ENCODE measurements at regions of chr20 and their contacts with region 1.

Region 1: DNA sequence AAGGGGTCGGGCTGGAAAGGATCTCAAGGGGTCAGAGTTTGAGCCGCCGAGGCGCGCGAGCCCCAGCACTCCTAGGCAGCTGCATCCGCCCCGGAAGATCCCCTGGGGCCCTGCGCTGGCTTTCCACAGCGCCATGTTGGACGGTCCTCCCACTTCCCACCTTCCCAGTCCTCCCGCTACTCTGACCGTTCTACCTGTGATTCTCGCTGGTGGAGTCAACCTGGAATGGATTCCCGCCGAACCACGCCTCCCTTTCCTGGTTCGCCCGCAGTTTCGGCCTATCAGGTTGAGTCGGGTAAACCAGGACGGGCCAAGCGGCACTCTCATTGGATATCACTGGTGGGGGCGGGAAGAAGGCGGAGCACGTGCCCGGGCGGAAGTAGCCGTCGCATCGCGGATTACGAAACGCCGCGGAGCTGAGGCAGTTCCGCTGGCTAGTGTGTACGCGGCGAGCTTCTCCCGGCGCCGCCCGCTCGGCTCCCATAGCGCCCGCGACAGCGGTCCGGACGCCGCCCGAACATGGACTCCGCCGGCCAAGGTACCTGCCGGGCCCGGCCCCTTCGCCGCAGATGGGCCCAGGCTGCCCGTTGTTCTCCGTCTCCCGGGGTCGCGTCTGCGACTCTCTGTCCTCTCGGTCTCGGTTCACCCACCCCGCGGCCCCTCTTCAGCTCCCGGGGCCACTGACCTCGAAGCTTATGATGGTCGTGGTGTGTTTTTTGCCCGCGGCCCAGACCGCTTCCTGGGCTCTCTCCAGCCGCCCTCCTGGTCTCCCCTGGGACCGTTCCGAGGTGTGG is at the start of gene TPD52L2:
- DNase-seq: peak; percentile 99
- ATAC-seq: peak; percentile 86
- H3K4me3 Mint-ChIP-seq: peak within 1 kb of the TSS; percentile 79
- H3K27ac Mint-ChIP-seq: peak within 1 kb of the TSS; percentile 92
- H3K4me1 Mint-ChIP-seq: peaks cover 24% of the 10 kb centered on the region
- H3K27me3 Mint-ChIP-seq: no peaks in the 10 kb centered on the region
- total RNA-seq, gene TPD52L2: 54.0 to 56.3 TPM

Region 2: DNA sequence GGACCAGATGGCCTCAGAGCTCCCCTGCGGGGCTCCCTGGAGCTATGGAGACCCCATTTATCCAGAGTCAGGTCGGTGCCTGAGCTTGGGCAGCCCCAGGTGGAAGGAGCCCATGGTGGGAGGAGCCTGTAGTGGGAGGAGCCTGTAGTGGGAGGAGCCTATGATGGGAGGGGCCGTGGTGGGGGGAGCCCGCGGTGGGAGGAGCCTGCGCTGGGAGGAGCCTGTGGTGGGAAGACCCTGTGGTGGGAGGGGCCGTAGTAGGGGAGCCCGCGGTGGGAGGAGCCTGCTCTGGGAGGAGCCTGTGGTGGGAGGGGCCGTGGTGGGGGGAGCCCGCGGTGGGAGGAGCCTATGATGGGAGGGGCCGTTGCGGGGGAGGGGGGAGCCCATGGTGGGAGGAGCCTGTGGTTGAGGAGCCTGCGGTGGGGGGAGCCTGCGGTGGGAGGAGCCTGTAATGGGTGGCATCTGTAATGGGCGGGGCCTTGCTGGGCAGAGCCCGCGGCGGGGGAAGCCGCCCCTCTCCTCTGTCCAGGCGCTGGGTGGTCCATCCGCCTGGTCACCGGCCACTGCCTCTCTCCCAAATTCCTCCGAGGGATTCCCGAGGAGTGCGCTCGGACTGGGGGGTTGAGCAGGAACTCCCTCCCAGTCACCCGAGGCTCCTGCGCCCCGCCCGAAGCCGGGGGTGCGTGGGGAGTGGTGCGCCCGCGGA is 311.7 kb before region 1 on chr20:
- CTCF ChIA-PET with region 1: interaction called, 4 read pairs
- POLR2A ChIA-PET with region 1: no interaction called
- intact Hi-C with region 1: loop called in 1 of 2 experiments (anchors 2 kb)
- DNase-seq: peak; percentile 95
- ATAC-seq: peak; percentile 88
- H3K4me3 Mint-ChIP-seq: no peak overlapping the region
- H3K27ac Mint-ChIP-seq: peak overlapping the region; percentile 45
- H3K4me1 Mint-ChIP-seq: peaks cover 11% of the 10 kb centered on the region
- H3K27me3 Mint-ChIP-seq: no peaks in the 10 kb centered on the region

Region 3: GRCh38 chr20:63657937-63658748 is 206.9 kb before region 1 on chr20 and contains the start of gene RTEL1:
- CTCF ChIA-PET with region 1: no interaction called
- POLR2A ChIA-PET with region 1: no interaction called
- intact Hi-C with region 1: loop called in 1 of 2 experiments (anchors 1 kb)
- DNase-seq: peak; percentile 92
- ATAC-seq: peak; percentile 82
- H3K4me3 Mint-ChIP-seq: peak within 1 kb of the TSS; percentile 95
- H3K27ac Mint-ChIP-seq: peak within 1 kb of the TSS; percentile 94
- H3K4me1 Mint-ChIP-seq: peaks cover 30% of the 10 kb centered on the region
- H3K27me3 Mint-ChIP-seq: no peaks in the 10 kb centered on the region
- total RNA-seq, gene RTEL1: 44.5 to 44.7 TPM

Region 4: DNA sequence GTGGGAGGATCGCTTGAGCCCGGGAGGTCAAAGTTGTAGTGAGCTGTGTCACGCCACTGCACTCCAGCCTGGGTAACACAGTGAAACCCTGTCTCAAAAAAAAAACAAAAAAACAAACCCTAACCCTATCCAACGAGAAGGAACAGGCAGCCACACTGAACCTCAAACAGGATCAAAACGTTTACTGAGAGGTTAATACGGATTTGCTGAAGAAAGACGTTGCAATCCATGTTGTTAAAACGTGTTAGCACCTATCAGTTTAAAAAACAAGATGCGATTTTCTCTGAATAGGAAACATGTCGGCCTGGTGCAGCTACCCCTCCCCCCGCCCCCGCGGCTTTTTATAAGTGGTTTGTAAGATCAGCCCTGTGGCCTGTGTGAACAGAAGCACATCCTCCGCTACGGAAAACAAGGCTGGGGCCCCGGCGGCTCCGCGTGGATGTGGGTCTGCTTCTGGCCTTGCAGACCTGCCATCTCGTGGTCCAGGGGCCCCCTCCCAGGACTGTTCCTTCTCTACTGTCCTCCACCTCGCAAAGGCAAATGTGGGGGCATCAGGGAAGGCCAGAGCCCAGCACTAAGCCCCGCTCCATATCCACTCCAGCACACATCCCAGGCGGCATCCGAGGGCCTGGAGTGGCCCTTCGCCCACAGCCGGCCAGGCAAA is 114.1 kb before region 1 on chr20:
- CTCF ChIA-PET with region 1: interaction called, 3 read pairs
- POLR2A ChIA-PET with region 1: no interaction called
- intact Hi-C with region 1: loop called in 1 of 2 experiments (anchors 1 kb)
- DNase-seq: peak; percentile 81
- ATAC-seq: peak; percentile 85
- H3K4me3 Mint-ChIP-seq: peak overlapping the region; percentile 49
- H3K27ac Mint-ChIP-seq: peak overlapping the region; percentile 89
- H3K4me1 Mint-ChIP-seq: peaks cover 20% of the 10 kb centered on the region
- H3K27me3 Mint-ChIP-seq: no peaks in the 10 kb centered on the region

Region 5: DNA sequence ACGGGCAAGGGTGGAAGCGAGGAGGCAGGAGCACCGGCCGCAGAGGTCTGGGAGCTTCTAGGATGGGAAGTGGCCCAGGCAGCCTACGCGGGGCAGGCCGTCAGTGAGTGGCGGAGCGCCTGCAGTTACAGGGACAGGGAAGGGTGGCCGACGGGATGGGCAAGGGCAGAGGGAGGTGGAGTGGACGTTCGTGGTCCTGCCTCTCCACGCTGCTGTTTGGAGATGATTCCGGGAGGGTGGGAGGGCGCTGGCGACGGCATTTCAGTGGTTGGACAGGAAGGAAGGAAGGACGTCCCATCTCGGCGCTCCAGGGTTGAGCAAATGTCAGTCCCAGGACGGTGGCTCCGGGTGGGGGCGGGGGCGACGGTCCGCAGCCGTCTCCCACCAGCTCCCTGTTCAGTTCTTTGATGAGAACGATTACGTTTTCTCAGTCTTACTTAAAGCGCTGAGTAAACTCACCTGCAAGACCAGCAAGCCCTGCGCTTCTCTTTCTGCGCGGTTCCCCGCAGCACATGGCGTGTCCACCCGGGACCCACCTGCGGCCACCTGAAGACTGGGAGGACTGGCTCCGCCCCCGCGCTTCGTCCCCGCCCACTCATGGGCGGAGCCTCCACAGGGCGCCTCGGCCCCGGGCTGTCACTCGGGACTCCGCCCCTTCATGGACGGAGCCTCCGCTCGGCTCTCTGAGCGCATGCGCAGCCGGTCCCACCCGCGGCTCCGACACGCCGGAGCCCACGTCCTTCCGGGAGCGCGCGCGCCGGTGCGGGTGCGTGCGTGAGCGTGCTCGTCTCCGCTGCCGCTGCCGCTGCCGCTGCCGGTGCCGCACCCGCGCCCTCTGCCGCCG is 29.5 kb after region 1 on chr20 and contains the start of gene DNAJC5:
- CTCF ChIA-PET with region 1: interaction called, 6 read pairs
- POLR2A ChIA-PET with region 1: interaction called, 5 read pairs
- intact Hi-C with region 1: loop called (anchors 1 kb)
- DNase-seq: peak; percentile 98
- ATAC-seq: peak; percentile 86
- H3K4me3 Mint-ChIP-seq: peak within 1 kb of the TSS; percentile 95
- H3K27ac Mint-ChIP-seq: peak within 1 kb of the TSS; percentile 98
- H3K4me1 Mint-ChIP-seq: peaks cover 40% of the 10 kb centered on the region
- H3K27me3 Mint-ChIP-seq: no peaks in the 10 kb centered on the region
- total RNA-seq, gene DNAJC5: 30.1 to 34.3 TPM